ENCODE measurements at regions of chr7 and their contacts with region 1.

Region 1: GRCh38 chr7:22990588-22990949 is 23.4 kb downstream of the HYCC1 start:
- DNase-seq: no peak
- H3K4me3 ChIP-seq: no peak overlapping the region
- H3K27ac ChIP-seq: no peak overlapping the region
- H3K4me1 ChIP-seq: peaks cover 0 to 16% (median 9%) of the 10 kb centered on the region in 4 experiments; a peak in 4 of 7 replicates
- H3K27me3 ChIP-seq: no peaks in the 10 kb centered on the region
- CTCF ChIP-seq: no peak
- EP300 ChIP-seq: no peak
- POLR2A ChIP-seq: no peak
- RAD21 ChIP-seq: no peak

Region 2: DNA sequence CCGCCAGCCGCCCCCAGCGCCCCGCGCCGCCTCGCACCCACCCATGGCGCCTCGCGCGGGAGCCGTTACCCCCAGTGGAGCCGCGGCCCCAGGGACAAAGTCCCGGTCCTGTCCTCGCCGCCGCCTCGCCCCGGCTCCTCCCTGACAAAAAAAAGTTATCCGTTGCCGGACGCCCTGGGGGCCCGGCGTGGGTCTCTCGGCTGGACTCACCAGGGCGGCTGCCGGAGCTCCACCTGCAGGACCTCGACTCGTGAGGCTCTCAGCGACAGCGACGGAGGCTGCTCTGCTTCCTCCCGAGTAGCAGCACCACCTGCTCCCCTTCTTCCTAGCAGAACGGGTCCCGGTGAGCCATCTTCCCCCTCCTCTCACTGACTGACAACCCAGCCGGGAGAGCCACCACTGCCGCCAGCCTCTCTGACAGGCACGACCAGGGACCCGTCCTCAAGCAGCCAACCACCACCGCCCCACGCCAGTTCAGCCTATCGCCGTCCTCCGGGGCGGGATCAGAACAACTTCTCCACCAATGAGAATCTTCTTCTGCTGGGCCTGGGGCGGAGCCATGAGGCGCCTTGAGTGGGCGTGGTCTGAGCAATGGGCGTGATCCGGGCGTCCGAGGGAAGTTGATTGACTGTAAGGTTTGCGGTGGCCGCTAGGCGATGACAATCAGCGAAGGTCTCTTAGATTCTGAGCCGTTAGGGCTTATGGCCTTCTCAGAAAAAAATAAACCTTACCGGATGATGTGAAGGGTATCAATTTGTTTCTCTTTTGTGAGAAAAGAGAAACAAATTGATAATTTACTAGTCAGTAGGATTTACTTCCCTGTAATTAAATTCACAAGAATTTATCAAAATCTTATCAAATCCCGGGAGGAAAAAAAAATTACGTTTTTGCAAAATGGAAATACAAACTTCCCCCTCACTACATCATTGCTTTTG is 23.4 kb after region 1 on chr7 and contains the start of gene HYCC1:
- CTCF ChIA-PET with region 1: interaction called, 5 read pairs
- POLR2A ChIA-PET with region 1: interaction called, 13 read pairs
- DNase-seq: peak; percentile 98 to 99
- H3K4me3 ChIP-seq: peak within 1 kb of the TSS; percentile 68 to 95 (median 85)
- H3K27ac ChIP-seq: no peak within 1 kb of the TSS
- H3K4me1 ChIP-seq: peaks cover 0 to 11% (median 3%) of the 10 kb centered on the region in 4 experiments; a peak in 4 of 7 replicates
- H3K27me3 ChIP-seq: no peaks in the 10 kb centered on the region
- CTCF ChIP-seq: peak; percentile 18 to 54 (median 51); a peak in 3 of 4 replicates
- EP300 ChIP-seq: no peak
- POLR2A ChIP-seq: peak; percentile 70 to 82
- RAD21 ChIP-seq: peak in 1 of 2 experiments; percentile 41; a peak in 2 of 4 replicates
- total RNA-seq, gene HYCC1: 142 and 147 TPM in 2 replicates